Activated CD4-positive, alpha-beta memory T cell treated with anti-CD3 and anti-CD28 coated beads for 36 hours (primary cell): ENCODE measurements at regions of chr6 and their contacts with region 1.

Region 1: GRCh38 chr6:130513770-130514169 is 148.0 kb downstream of the TMEM200A start:
- DNase-seq: peak; percentile 68
- H3K4me3 Mint-ChIP-seq: no peak overlapping the region
- H3K27ac Mint-ChIP-seq: peak overlapping the region; percentile 81
- H3K4me1 Mint-ChIP-seq: peaks cover 65% of the 10 kb centered on the region
- H3K27me3 Mint-ChIP-seq: no peaks in the 10 kb centered on the region

Region 2: GRCh38 chr6:130027948-130028347 is 485.8 kb before region 1 on chr6:
- CTCF ChIA-PET with region 1: no interaction called
- POLR2A ChIA-PET with region 1: no interaction called
- intact Hi-C with region 1: loop called (anchors 5 kb)
- DNase-seq: no peak
- H3K4me3 Mint-ChIP-seq: no peak overlapping the region
- H3K27ac Mint-ChIP-seq: peak overlapping the region; percentile 70
- H3K4me1 Mint-ChIP-seq: peaks cover 53% of the 10 kb centered on the region
- H3K27me3 Mint-ChIP-seq: no peaks in the 10 kb centered on the region

Region 3: GRCh38 chr6:130503146-130503545 is 10.6 kb before region 1 on chr6:
- CTCF ChIA-PET with region 1: no interaction called
- POLR2A ChIA-PET with region 1: no interaction called
- intact Hi-C with region 1: loop called (anchors 2 kb)
- DNase-seq: no peak
- H3K4me3 Mint-ChIP-seq: no peak overlapping the region
- H3K27ac Mint-ChIP-seq: no peak overlapping the region
- H3K4me1 Mint-ChIP-seq: peaks cover 23% of the 10 kb centered on the region
- H3K27me3 Mint-ChIP-seq: no peaks in the 10 kb centered on the region

Region 4: GRCh38 chr6:130560231-130560630 is 46.5 kb after region 1 on chr6:
- CTCF ChIA-PET with region 1: no interaction called
- POLR2A ChIA-PET with region 1: no interaction called
- intact Hi-C with region 1: no loop called
- DNase-seq: no peak
- H3K4me3 Mint-ChIP-seq: no peak overlapping the region
- H3K27ac Mint-ChIP-seq: no peak overlapping the region
- H3K4me1 Mint-ChIP-seq: peaks cover 14% of the 10 kb centered on the region
- H3K27me3 Mint-ChIP-seq: no peaks in the 10 kb centered on the region

Region 5: GRCh38 chr6:130602151-130602770 is 88.5 kb after region 1 on chr6:
- CTCF ChIA-PET with region 1: no interaction called
- POLR2A ChIA-PET with region 1: no interaction called
- intact Hi-C with region 1: loop called (anchors 1 kb)
- DNase-seq: peak; percentile 49
- H3K4me3 Mint-ChIP-seq: no peak overlapping the region
- H3K27ac Mint-ChIP-seq: no peak overlapping the region
- H3K4me1 Mint-ChIP-seq: peaks cover 23% of the 10 kb centered on the region
- H3K27me3 Mint-ChIP-seq: no peaks in the 10 kb centered on the region

Region 6: GRCh38 chr6:130676077-130676772 is 162.5 kb after region 1 on chr6:
- CTCF ChIA-PET with region 1: no interaction called
- POLR2A ChIA-PET with region 1: no interaction called
- intact Hi-C with region 1: loop called (anchors 5 kb)
- DNase-seq: no peak
- H3K4me3 Mint-ChIP-seq: no peak overlapping the region
- H3K27ac Mint-ChIP-seq: no peak overlapping the region
- H3K4me1 Mint-ChIP-seq: peaks cover 14% of the 10 kb centered on the region
- H3K27me3 Mint-ChIP-seq: no peaks in the 10 kb centered on the region